ENCODE measurements at regions of chr1 and their contacts with region 1.

Region 1: DNA sequence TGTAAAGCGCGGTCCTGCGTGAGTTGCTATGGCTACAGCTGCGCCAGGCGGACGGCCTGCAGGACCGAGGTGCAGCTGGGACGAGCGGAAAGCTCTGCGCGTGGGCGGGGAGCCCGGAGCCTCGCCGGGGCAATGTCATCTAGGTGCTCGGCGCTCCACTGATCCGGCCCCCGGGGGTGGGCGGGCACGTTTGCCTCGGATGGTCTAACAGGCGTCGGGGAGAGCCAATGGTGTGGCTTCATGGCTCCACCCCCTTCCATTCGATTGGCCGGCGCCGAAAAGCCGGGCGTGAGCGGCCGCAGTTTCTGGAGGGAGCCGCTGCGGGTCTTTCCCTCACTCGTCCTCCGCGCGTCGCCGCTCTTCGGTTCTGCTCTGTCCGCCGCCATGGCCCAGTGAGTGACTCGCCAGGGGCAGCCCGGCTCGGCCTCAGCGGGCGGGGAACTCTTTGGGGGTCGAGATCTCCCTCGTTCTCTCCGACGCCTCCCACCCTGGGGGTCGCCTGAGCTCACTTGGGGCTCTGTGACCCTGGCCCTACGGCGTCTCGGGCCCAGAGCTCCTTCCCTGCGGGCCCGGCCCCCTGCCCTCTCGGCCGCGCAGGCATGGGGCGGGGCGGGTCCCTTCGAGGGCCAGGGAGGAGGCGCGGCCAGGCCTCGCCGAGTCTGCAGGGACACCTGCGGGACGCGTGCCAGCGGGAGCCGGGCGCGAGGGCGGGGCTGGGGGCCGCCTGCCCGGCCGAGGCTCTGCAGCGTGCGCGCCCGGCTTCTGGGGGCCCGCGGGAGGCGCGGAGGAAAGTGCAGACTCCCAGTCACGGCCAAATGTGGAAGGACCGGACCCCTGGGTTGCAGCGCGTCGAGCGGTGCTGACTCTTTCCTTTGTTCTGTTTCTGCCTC is at the start of gene PGD:
- DNase-seq: peak; percentile 87 to 99
- H3K4me3 ChIP-seq: peak within 1 kb of the TSS; percentile 84 to 99 (median 95)
- H3K27ac ChIP-seq: peak within 1 kb of the TSS; percentile 90
- H3K4me1 ChIP-seq: peaks cover 0 to 7% (median 5%) of the 10 kb centered on the region in 4 experiments; a peak in 5 of 7 replicates
- H3K27me3 ChIP-seq: no peaks in the 10 kb centered on the region
- CTCF ChIP-seq: no peak
- EP300 ChIP-seq: no peak
- POLR2A ChIP-seq: peak; percentile 90 to 94
- RAD21 ChIP-seq: no peak
- total RNA-seq, gene PGD: 331 and 340 TPM in 2 replicates

Region 2: GRCh38 chr1:10378081-10378841 is 20.7 kb before region 1 on chr1:
- CTCF ChIA-PET with region 1: interaction called, 18 read pairs
- POLR2A ChIA-PET with region 1: interaction called, 72 read pairs
- DNase-seq: no peak
- H3K4me3 ChIP-seq: no peak overlapping the region
- H3K27ac ChIP-seq: no peak overlapping the region
- H3K4me1 ChIP-seq: no peaks in the 10 kb centered on the region
- H3K27me3 ChIP-seq: no peaks in the 10 kb centered on the region
- CTCF ChIP-seq: no peak
- EP300 ChIP-seq: no peak
- POLR2A ChIP-seq: no peak
- RAD21 ChIP-seq: no peak

Region 3: GRCh38 chr1:10387413-10388079 is 11.4 kb before region 1 on chr1:
- CTCF ChIA-PET with region 1: interaction called, 11 read pairs
- POLR2A ChIA-PET with region 1: interaction called, 72 read pairs
- DNase-seq: no peak
- H3K4me3 ChIP-seq: no peak overlapping the region
- H3K27ac ChIP-seq: peak overlapping the region; percentile 66
- H3K4me1 ChIP-seq: peaks cover 0 to 5% (median 0%) of the 10 kb centered on the region in 4 experiments; a peak in 3 of 7 replicates
- H3K27me3 ChIP-seq: no peaks in the 10 kb centered on the region
- CTCF ChIP-seq: no peak
- EP300 ChIP-seq: no peak
- POLR2A ChIP-seq: no peak
- RAD21 ChIP-seq: no peak

Region 4: DNA sequence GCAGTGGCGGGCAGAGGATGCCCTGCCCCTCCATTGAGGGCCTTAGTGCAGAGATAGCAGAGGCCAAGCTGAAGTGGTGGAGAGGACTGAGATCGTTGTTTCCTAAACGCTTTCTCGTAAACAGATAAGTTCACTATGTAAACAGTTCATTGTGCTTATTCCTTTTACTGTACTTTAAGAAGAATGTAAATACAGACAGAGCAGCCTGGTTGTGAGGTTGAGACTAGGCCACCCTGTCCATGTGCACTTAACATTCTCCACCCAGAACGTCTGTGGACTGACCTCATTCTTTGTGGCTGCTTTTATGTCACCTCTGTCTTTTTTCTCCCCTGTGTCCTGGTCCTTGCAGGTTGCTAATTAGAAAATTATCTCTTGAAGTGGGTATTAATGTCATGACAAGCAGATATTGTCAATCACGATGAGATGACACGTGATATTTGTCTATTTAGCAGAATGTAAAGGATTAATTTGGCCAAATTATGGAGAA is 39.7 kb after region 1 on chr1:
- CTCF ChIA-PET with region 1: no interaction called
- POLR2A ChIA-PET with region 1: no interaction called
- DNase-seq: no peak
- H3K4me3 ChIP-seq: no peak overlapping the region
- H3K27ac ChIP-seq: no peak overlapping the region
- H3K4me1 ChIP-seq: no peaks in the 10 kb centered on the region
- H3K27me3 ChIP-seq: no peaks in the 10 kb centered on the region
- CTCF ChIP-seq: no peak
- EP300 ChIP-seq: no peak
- POLR2A ChIP-seq: no peak
- RAD21 ChIP-seq: no peak

Region 5: GRCh38 chr1:10459181-10459580 is 60.2 kb after region 1 on chr1:
- CTCF ChIA-PET with region 1: no interaction called
- POLR2A ChIA-PET with region 1: interaction called, 15 read pairs
- DNase-seq: no peak
- H3K4me3 ChIP-seq: no peak overlapping the region
- H3K27ac ChIP-seq: no peak overlapping the region
- H3K4me1 ChIP-seq: no peaks in the 10 kb centered on the region
- H3K27me3 ChIP-seq: no peaks in the 10 kb centered on the region
- CTCF ChIP-seq: no peak
- EP300 ChIP-seq: no peak
- POLR2A ChIP-seq: no peak
- RAD21 ChIP-seq: no peak

Measured in H1 (cell line).